ENCODE measurements at regions of chr2 and their contacts with region 1.

Region 1: GRCh38 chr2:172427256-172427989 is at the start of gene ITGA6:
- DNase-seq: peak; percentile 83
- H3K4me3 Mint-ChIP-seq: peak within 1 kb of the TSS; percentile 86
- H3K27ac Mint-ChIP-seq: peak within 1 kb of the TSS; percentile 95
- H3K4me1 Mint-ChIP-seq: peaks cover 16% of the 10 kb centered on the region
- H3K27me3 Mint-ChIP-seq: no peaks in the 10 kb centered on the region
- CTCF ChIP-seq: no peak
- total RNA-seq, gene ITGA6: 315 and 323 TPM in 2 replicates

Region 2: GRCh38 chr2:172172513-172173173 is 254.8 kb before region 1 on chr2:
- CTCF ChIA-PET with region 1: interaction called, 6 read pairs
- POLR2A ChIA-PET with region 1: interaction called, 6 read pairs
- intact Hi-C with region 1: loop called (anchors 1 kb)
- DNase-seq: peak; percentile 74
- H3K4me3 Mint-ChIP-seq: peak overlapping the region; percentile 66
- H3K27ac Mint-ChIP-seq: no peak overlapping the region
- H3K4me1 Mint-ChIP-seq: no peaks in the 10 kb centered on the region
- H3K27me3 Mint-ChIP-seq: no peaks in the 10 kb centered on the region
- CTCF ChIP-seq: peak; percentile 93

Region 3: DNA sequence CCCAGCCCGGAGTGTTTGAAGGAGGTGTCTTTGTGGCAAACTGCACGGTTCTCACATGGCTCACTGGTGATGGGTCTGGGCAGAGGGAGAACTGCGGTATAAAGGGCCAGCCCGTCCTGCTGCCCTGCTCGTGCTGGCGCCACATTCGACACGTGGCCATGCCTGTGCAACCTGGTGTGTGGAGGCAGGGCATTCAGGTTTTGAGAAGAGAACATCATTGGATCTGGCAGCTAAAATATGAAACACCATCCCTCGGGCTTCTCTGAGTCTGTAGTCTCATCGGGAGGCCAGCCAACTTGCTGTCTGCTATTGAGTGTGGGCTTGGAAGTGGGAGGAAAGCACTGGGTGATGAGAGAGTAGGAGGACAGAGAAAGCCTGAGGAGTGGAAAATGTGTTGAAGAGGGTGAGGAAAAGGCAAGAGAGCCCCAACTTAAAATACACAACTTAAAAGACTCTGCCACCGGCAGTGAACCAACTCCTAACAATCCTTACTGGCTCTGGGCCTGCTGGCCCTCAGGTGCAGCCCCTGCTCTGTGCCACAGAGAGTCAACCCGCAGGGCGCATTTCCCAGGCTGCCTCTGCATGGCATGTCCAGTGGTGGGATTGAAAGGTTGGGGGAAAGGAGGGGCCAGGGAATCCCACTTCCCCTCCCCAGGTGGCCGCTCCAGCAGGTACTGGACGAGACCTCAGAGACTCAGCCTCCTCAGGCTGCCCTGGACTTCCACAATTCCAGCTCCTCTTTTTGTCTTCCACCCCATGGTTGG is 212.1 kb before region 1 on chr2:
- CTCF ChIA-PET with region 1: no interaction called
- POLR2A ChIA-PET with region 1: interaction called, 13 read pairs
- intact Hi-C with region 1: no loop called
- DNase-seq: peak; percentile 60
- H3K4me3 Mint-ChIP-seq: no peak overlapping the region
- H3K27ac Mint-ChIP-seq: peak overlapping the region; percentile 81
- H3K4me1 Mint-ChIP-seq: peaks cover 20% of the 10 kb centered on the region
- H3K27me3 Mint-ChIP-seq: no peaks in the 10 kb centered on the region
- CTCF ChIP-seq: no peak

Region 4: GRCh38 chr2:172253190-172254052 is 174.0 kb before region 1 on chr2:
- CTCF ChIA-PET with region 1: interaction called, 6 read pairs
- POLR2A ChIA-PET with region 1: interaction called, 20 read pairs
- intact Hi-C with region 1: loop called (anchors 10 kb)
- DNase-seq: peak; percentile 100
- H3K4me3 Mint-ChIP-seq: peak overlapping the region; percentile 56
- H3K27ac Mint-ChIP-seq: peak overlapping the region; percentile 100
- H3K4me1 Mint-ChIP-seq: peaks cover 55% of the 10 kb centered on the region
- H3K27me3 Mint-ChIP-seq: no peaks in the 10 kb centered on the region
- CTCF ChIP-seq: no peak

Region 5: GRCh38 chr2:172408143-172408766 is 19.2 kb before region 1 on chr2:
- CTCF ChIA-PET with region 1: interaction called, 5 read pairs
- POLR2A ChIA-PET with region 1: interaction called, 104 read pairs
- intact Hi-C with region 1: no loop called
- DNase-seq: peak; percentile 97
- H3K4me3 Mint-ChIP-seq: peak overlapping the region; percentile 22
- H3K27ac Mint-ChIP-seq: peak overlapping the region; percentile 88
- H3K4me1 Mint-ChIP-seq: peaks cover 37% of the 10 kb centered on the region
- H3K27me3 Mint-ChIP-seq: no peaks in the 10 kb centered on the region
- CTCF ChIP-seq: no peak

Region 6: DNA sequence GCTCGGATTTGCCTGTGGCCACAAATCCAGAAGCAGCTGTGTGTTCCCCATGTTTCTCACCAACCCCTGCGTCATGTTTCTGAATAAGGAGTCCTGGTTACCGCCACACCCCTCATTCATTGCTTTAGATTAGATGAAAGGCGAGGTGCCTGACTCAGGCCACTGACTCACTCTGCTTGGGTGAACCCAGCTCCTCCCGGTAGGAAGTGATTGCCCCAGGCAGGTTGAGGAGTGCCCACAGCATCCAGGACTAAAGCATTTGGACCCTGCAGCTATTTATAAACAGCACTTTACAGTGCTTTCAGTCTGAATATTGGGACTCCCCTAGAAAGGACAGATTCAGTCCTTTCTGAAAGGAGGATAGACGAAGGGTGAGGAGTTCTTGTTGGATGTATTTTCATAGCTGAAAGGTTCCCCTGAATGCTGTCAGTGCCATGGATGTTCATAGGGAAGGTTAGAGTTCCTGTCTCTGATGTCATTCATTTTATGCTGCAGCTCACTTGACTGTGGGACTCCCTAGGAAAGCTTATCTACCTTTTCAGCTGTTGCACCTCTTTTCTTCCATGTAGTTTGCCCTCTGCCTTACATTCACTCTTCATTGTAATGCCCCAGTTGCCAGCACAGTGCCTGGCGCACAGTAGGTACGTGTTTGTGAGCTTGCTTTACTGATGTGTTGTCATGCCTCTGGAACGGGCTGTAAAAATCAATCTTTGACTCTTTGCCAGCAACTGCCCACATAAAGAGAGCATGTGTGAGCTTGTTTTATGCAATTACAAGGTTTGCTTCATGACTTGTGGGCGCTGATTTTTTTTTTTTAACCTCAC is 14.9 kb after region 1 on chr2:
- CTCF ChIA-PET with region 1: interaction called, 63 read pairs
- POLR2A ChIA-PET with region 1: interaction called, 553 read pairs
- intact Hi-C with region 1: loop called (anchors 1 kb)
- DNase-seq: peak; percentile 99
- H3K4me3 Mint-ChIP-seq: peak overlapping the region; percentile 65
- H3K27ac Mint-ChIP-seq: peak overlapping the region; percentile 98
- H3K4me1 Mint-ChIP-seq: peaks cover 45% of the 10 kb centered on the region
- H3K27me3 Mint-ChIP-seq: no peaks in the 10 kb centered on the region
- CTCF ChIP-seq: no peak

Region 7: DNA sequence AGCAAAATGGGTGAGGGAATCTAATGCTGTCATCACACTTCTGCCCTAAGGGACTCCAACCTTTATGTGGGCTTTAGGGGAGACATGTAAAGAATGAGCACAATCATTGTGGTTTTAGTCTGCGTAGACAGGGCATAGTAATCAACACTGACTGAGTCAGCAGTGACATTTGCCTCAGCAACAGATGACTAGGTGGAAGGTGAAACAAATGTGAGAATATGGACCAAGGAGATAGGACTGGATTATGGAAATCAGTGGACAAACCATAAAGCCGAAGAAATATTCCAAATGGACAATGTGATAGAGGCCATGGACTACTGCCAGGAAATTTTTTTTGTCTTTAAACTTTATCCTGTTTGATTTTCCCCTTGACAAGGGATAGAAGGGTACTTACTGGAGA is 212.4 kb after region 1 on chr2:
- CTCF ChIA-PET with region 1: no interaction called
- POLR2A ChIA-PET with region 1: no interaction called
- intact Hi-C with region 1: no loop called
- DNase-seq: peak; percentile 42
- H3K4me3 Mint-ChIP-seq: no peak overlapping the region
- H3K27ac Mint-ChIP-seq: no peak overlapping the region
- H3K4me1 Mint-ChIP-seq: peaks cover 16% of the 10 kb centered on the region
- H3K27me3 Mint-ChIP-seq: no peaks in the 10 kb centered on the region
- CTCF ChIP-seq: no peak

Region 8: GRCh38 chr2:172806493-172806892 is 379.1 kb after region 1 on chr2:
- CTCF ChIA-PET with region 1: no interaction called
- POLR2A ChIA-PET with region 1: no interaction called
- intact Hi-C with region 1: no loop called
- DNase-seq: peak; percentile 56
- H3K4me3 Mint-ChIP-seq: no peak overlapping the region
- H3K27ac Mint-ChIP-seq: no peak overlapping the region
- H3K4me1 Mint-ChIP-seq: no peaks in the 10 kb centered on the region
- H3K27me3 Mint-ChIP-seq: no peaks in the 10 kb centered on the region
- CTCF ChIP-seq: peak; percentile 81

Region 9: DNA sequence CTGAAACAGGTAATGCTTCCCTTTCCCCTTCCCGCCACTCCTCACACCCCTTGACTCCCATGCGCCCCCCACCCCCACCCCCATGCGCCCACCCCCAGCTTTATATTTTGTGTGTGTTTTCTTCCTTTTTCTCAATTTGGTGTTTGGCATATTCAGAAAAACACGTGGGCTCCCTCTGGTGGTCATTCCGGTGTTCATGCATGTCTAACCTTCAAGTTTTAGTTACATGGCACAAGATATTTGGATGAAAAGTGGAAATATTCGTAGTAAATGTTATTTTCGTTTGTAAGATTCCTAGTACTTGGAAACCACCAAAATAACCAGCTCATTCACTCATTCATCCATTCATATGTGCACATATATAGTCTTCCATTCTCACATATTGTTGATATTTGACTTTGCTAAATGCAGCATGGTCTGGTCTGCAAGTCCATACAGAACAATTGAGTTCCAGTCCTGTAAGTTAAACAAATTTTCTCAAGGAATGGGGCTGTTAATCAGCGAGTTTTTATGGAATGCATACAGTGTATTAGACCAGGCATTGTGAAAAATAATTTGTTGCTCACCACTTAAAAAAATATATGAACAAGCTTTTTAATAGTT is 504.6 kb after region 1 on chr2:
- CTCF ChIA-PET with region 1: no interaction called
- POLR2A ChIA-PET with region 1: no interaction called
- intact Hi-C with region 1: no loop called
- DNase-seq: peak; percentile 72
- H3K4me3 Mint-ChIP-seq: no peak overlapping the region
- H3K27ac Mint-ChIP-seq: no peak overlapping the region
- H3K4me1 Mint-ChIP-seq: peaks cover 41% of the 10 kb centered on the region
- H3K27me3 Mint-ChIP-seq: no peaks in the 10 kb centered on the region
- CTCF ChIP-seq: peak; percentile 54

Measured in MCF 10A (cell line).